ENCODE measurements at regions of chr6 and their contacts with region 1.

Region 1: GRCh38 chr6:160992061-160992979 is 751 bp downstream of the MAP3K4 start:
- DNase-seq: no peak
- H3K4me3 ChIP-seq: peak overlapping the region; percentile 82
- CTCF ChIP-seq: peak; percentile 72

Region 2: DNA sequence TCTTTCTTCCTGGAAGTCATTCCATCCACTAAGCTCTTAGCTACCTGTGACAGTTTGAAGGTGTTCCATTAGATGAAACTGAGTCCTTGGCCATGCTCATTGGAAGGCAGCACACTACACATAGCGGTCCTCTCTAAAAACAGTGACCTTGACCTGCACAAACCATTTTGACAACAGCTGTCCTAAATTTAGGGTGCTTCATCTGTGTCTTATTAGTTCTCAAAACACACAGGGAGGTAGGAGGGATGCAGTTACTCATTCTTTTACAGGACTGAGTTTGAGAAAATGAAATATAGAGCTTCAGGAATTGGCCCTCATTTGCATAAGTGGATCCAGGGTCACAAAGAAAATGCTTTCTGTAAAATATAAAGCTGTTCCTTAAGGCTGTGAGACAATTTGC is 21.1 kb before region 1 on chr6:
- CTCF ChIA-PET with region 1: interaction called, 10 read pairs
- POLR2A ChIA-PET with region 1: no interaction called
- DNase-seq: no peak
- H3K4me3 ChIP-seq: no peak overlapping the region
- CTCF ChIP-seq: no peak

Region 3: GRCh38 chr6:161011492-161012480 is 19.5 kb after region 1 on chr6:
- CTCF ChIA-PET with region 1: interaction called, 17 read pairs
- POLR2A ChIA-PET with region 1: no interaction called
- DNase-seq: no peak
- H3K4me3 ChIP-seq: no peak overlapping the region
- CTCF ChIP-seq: no peak